CD4-positive, alpha-beta T cell (primary cell): ENCODE measurements at regions of chr2 and their contacts with region 1.

Region 1: DNA sequence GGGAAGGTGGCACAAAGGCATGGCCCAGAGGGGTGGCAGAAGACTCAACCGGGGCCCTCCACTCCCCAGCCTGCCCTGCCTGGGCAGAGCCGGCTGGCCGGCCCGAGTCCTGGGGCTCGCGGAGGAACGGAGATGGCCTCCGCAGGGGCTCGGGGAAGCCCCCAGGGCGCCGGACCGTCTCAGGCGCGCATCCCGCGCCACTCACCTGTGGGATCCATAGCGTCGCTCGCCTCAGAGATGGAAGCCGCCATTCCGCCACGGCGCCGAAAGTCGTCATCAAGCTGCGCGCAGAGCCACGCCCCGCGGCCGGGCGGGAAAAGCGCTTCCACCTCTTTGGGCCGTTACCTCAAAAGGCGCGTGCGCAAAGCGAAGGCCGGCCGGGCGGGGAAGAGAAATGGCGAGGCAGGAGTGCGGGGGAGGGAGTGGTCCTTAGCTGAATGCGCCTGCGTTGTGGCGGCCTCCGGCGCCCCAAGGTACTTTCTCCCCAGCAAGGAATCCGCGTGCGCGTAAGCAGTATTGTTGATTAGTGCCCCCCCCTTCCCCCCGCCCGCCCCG is at the start of gene SMPD4:
- DNase-seq: peak; percentile 97 to 99 (median 98)
- ATAC-seq: peak; percentile 76
- H3K4me3 ChIP-seq: peak within 1 kb of the TSS; percentile 66
- H3K4me3 Mint-ChIP-seq: peak within 1 kb of the TSS; percentile 98
- H3K27ac ChIP-seq: peak within 1 kb of the TSS; percentile 75 to 89
- H3K27ac Mint-ChIP-seq: peak within 1 kb of the TSS; percentile 99
- H3K4me1 ChIP-seq: peaks cover 32% of the 10 kb centered on the region
- H3K4me1 Mint-ChIP-seq: peaks cover 26% of the 10 kb centered on the region
- H3K27me3 ChIP-seq: no peaks in the 10 kb centered on the region
- H3K27me3 Mint-ChIP-seq: no peaks in the 10 kb centered on the region
- CTCF ChIP-seq: no peak
- total RNA-seq, gene SMPD4: 81.2 to 89.9 TPM

Region 2: DNA sequence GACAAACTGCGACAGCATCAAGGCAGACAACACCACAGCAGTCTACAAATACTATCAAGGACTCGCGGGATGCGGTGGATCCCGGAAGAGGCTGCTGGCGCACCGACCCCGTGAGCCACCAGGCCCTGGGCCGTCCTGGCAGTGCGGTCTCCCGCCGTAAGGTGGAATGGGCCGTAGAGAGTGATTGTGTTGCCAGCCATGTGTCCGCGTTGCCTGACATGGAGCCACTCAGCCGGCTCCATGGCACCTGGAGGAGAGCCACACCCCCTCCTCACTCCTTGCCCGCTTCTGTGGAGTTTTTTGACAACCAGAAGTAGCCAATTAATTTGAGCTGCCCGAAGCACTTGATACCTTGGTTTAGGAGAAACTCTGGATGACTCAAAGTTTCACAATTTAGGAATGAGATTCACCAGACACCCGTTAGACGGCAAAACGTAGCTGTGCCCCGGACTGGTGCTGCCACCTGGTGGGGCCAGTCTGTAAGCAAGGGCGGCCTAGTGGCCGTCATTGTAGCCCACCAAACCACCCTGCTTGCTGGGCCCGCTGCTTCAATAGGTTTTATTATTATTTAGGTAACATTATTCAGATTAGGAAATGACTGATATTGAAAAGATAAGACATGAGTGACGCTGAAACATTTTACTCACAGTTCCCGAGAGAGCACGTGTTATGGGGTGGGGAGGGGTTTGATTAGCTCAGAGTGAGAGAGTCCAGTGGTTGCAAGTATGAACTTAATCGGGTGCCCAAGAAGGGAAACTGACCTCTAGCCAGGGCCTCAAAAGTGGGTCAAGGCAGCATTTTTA is 151.1 kb after region 1 on chr2:
- CTCF ChIA-PET with region 1: no interaction called
- POLR2A ChIA-PET with region 1: interaction called, 8 read pairs
- intact Hi-C with region 1: loop called in 1 of 2 experiments (anchors 2 kb)
- DNase-seq: peak; percentile 45 to 80 (median 62)
- ATAC-seq: peak; percentile 76
- H3K4me3 ChIP-seq: no peak overlapping the region
- H3K4me3 Mint-ChIP-seq: peak overlapping the region; percentile 40
- H3K27ac ChIP-seq: no peak overlapping the region
- H3K27ac Mint-ChIP-seq: no peak overlapping the region
- H3K4me1 ChIP-seq: peaks cover 9% of the 10 kb centered on the region
- H3K4me1 Mint-ChIP-seq: peaks cover 14% of the 10 kb centered on the region
- H3K27me3 ChIP-seq: peaks cover 2 to 7% of the 10 kb centered on the region in 2 experiments
- H3K27me3 Mint-ChIP-seq: peaks cover 36% of the 10 kb centered on the region
- CTCF ChIP-seq: peak; percentile 94

Region 3: GRCh38 chr2:130727286-130728018 is 546.0 kb after region 1 on chr2:
- CTCF ChIA-PET with region 1: no interaction called
- POLR2A ChIA-PET with region 1: no interaction called
- intact Hi-C with region 1: loop called in 1 of 2 experiments (anchors 10 kb)
- DNase-seq: peak; percentile 77 to 94 (median 87)
- ATAC-seq: peak; percentile 91
- H3K4me3 ChIP-seq: peak overlapping the region; percentile 84
- H3K4me3 Mint-ChIP-seq: peak overlapping the region; percentile 88
- H3K27ac ChIP-seq: peak overlapping the region; percentile 62 to 89
- H3K27ac Mint-ChIP-seq: peak overlapping the region; percentile 90
- H3K4me1 ChIP-seq: peaks cover 34% of the 10 kb centered on the region
- H3K4me1 Mint-ChIP-seq: no peaks in the 10 kb centered on the region
- H3K27me3 ChIP-seq: no peaks in the 10 kb centered on the region
- H3K27me3 Mint-ChIP-seq: peaks cover 5% of the 10 kb centered on the region
- CTCF ChIP-seq: no peak

Region 4: DNA sequence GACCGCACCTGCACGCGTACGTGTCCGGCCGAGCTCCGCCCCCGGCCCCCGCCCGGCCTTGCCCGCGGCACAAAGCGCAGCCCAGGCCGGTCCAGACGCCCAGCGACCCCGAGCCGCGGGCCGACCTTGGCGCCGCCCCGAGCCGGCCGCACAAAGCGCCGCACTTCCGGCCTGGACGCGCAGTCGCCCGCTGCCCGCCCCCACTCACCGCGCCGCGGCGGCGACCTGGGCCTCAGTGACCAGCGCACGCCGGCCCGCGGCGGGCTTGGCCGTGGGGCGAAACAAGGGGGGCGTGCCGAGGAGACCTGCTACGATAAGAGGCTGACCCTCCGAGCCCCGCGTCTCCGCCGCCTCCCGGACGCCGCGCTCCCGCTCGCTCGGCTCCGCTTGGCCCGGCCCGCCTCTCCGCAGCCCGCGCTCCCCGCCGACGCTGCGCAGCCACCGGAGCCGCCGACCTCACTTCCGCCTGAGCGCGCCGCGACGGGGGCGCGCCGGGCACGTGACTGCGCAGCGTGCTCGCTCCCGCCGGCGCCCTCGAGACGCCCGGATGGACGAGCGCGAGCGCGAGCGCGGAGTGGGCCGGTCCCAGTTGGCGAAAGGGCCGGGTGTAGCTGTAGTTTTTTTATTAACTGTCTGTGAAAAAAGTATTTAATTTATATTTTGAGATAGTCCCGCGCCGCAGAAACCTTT is 911.7 kb after region 1 on chr2 and contains the start of gene FAM168B:
- CTCF ChIA-PET with region 1: no interaction called
- POLR2A ChIA-PET with region 1: interaction called, 4 read pairs
- intact Hi-C with region 1: loop called in 1 of 2 experiments (anchors 5 kb)
- DNase-seq: peak; percentile 77 to 97 (median 88)
- ATAC-seq: peak; percentile 84
- H3K4me3 ChIP-seq: peak within 1 kb of the TSS; percentile 82
- H3K4me3 Mint-ChIP-seq: peak within 1 kb of the TSS; percentile 92
- H3K27ac ChIP-seq: peak within 1 kb of the TSS; percentile 79 to 90
- H3K27ac Mint-ChIP-seq: peak within 1 kb of the TSS; percentile 93
- H3K4me1 ChIP-seq: peaks cover 26% of the 10 kb centered on the region
- H3K4me1 Mint-ChIP-seq: peaks cover 32% of the 10 kb centered on the region
- H3K27me3 ChIP-seq: no peaks in the 10 kb centered on the region
- H3K27me3 Mint-ChIP-seq: no peaks in the 10 kb centered on the region
- CTCF ChIP-seq: no peak
- total RNA-seq, gene FAM168B: 74.1 to 76.4 TPM